ENCODE measurements at regions of chr10 and their contacts with region 1.

Region 1: GRCh38 chr10:101576211-101576863 is 11.7 kb downstream of the POLL start:
- DNase-seq: no peak
- ATAC-seq: no peak
- H3K4me3 ChIP-seq: no peak overlapping the region
- H3K4me3 Mint-ChIP-seq: no peak overlapping the region
- H3K27ac ChIP-seq: no peak overlapping the region
- H3K27ac Mint-ChIP-seq: no peak overlapping the region
- H3K4me1 ChIP-seq: no peaks in the 10 kb centered on the region
- H3K4me1 Mint-ChIP-seq: no peaks in the 10 kb centered on the region
- H3K27me3 ChIP-seq: no peaks in the 10 kb centered on the region
- H3K27me3 Mint-ChIP-seq: no peaks in the 10 kb centered on the region
- CTCF ChIP-seq: no peak

Region 2: GRCh38 chr10:101536800-101537199 is 39.5 kb before region 1 on chr10:
- CTCF ChIA-PET with region 1: interaction called, 44 read pairs
- POLR2A ChIA-PET with region 1: interaction called, 10 read pairs
- intact Hi-C with region 1: no loop called
- DNase-seq: peak; percentile 39
- ATAC-seq: no peak
- H3K4me3 ChIP-seq: no peak overlapping the region
- H3K4me3 Mint-ChIP-seq: no peak overlapping the region
- H3K27ac ChIP-seq: no peak overlapping the region
- H3K27ac Mint-ChIP-seq: no peak overlapping the region
- H3K4me1 ChIP-seq: no peaks in the 10 kb centered on the region
- H3K4me1 Mint-ChIP-seq: no peaks in the 10 kb centered on the region
- H3K27me3 ChIP-seq: no peaks in the 10 kb centered on the region
- H3K27me3 Mint-ChIP-seq: no peaks in the 10 kb centered on the region
- CTCF ChIP-seq: peak; percentile 68